ENCODE measurements at regions of chr2 and their contacts with region 1.

Region 1: DNA sequence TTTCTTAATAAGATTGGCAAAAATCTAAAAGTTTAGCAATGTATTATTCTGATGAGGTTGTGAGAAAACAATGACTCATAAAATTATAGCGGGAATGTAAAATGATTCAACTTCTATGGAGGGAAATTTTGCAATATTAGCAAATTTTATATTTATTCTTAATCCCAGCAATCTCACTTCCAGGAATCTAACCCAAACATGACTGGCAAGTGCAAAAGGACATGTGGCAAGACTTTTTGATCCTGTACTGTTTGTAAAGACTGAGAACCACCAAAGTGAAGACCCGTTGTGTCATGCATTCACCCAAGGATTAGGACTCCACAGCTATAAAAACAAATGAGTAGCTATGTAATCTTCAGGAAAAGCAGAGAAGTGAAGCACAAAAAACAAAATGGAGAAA is 234.8 kb upstream of the KYNU start:
- DNase-seq: no peak
- H3K4me3 ChIP-seq: no peak overlapping the region
- H3K27ac ChIP-seq: no peak overlapping the region
- H3K4me1 ChIP-seq: no peaks in the 10 kb centered on the region
- H3K27me3 ChIP-seq: no peaks in the 10 kb centered on the region
- CTCF ChIP-seq: no peak
- POLR2A ChIP-seq: no peak

Region 2: DNA sequence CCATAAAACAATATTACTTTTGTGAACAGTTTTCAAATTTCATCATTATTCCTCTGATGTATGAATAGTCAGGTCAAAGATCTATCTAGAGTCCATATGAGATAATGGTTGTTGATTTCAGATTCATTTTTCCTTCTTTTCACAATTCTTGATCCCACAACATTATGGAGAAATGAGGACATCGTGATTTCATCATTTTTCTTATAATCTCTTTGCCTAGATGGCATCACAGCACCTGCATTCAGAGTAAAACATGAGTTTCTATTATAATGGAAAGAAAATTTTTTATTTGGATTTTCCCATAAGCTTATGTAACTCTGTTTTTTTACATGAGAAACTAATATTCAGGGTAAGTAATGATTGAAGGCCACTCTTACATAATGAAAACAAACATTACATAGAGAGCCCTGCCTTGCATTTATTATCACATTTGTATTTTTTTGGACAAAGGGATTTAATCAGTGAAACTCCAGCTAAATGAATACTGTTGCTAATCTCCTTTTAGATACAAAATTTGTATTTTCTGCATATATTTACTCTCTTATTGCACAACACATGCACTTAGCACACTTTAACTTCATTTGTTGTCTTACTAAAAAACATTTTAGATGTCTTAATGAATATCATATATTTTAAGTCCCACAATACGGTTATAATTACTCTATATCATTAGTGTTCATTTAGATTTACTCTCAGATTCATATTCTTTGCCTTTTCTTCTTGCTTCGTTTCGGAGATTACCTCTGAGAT is 46.4 kb after region 1 on chr2:
- intact Hi-C with region 1: loop called (anchors 5 kb)
- DNase-seq: no peak
- H3K4me3 ChIP-seq: no peak overlapping the region
- H3K27ac ChIP-seq: no peak overlapping the region
- H3K4me1 ChIP-seq: no peaks in the 10 kb centered on the region
- H3K27me3 ChIP-seq: no peaks in the 10 kb centered on the region
- CTCF ChIP-seq: no peak
- POLR2A ChIP-seq: no peak